Mammary epithelial cell (primary cell): ENCODE measurements at regions of chr3 and their contacts with region 1.

Region 1: DNA sequence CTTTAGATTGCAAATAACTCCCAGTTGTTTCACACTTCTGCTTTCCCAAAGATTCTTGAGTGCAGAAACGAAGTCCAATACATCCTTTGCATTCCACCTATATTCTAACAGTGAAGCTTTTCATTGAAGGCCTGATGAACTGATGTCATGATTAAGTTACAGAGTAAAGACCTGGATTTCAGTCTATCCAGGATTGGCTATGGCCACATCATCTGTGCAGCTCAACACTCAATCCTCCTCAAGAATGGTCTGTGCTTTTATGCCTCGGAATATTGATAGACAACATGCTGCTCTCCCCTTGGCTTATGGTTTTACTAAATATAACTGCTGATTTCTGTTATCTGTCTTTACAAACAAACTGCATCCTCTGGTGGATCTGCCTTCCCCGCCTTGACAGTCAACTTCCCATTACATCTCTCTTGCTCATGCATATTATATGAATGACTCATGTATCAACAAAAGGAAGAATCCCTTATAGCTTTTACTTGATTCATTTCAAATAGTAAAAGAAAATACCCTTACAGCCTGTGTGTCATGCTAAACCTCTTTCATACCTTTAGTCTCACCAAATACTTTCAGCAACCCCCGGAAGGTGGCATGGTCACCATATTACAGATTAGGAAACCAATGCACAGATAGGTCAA is 59.5 kb downstream of the SCN11A start:
- DNase-seq: peak; percentile 71
- H3K4me3 ChIP-seq: no peak overlapping the region
- H3K27ac ChIP-seq: peak overlapping the region; percentile 37
- H3K4me1 ChIP-seq: peaks cover 16% of the 10 kb centered on the region
- H3K27me3 ChIP-seq: no peaks in the 10 kb centered on the region
- CTCF ChIP-seq: no peak

Region 2: DNA sequence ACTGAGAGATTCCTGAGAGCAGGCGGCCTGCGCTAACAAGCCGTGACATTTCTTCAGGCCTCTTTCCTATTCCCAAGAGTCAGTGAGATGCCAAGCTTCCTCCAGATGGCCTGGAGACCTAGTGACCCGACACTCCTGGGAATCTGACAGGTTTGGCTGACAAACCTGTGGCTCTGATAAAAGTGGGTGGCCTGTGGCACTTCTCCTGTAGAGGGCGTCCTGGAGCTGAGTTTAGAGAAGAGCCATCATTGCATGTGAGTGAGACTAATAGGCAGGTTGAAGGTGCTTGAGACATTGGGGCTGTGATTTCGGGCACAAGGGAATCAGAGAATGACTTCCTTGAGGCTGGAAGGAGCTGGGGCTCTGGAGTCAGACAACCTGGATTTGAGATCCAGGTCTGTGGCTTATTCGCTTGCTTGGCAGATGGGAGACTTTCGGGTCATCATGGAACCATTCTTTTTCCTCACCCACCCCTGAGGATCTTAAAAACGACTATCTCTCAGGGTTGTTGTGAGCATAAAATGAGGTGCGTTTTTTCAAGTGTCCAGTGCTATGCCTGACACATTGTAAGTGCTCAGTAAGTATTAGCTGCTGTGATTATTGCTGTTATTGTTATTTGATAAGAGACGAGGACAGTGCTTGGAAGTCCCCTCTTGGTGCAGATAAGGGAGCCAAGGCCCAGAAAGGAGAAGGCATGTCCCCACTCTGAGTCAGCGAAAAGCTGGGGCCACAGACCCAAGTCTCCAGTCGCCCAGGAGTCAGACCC is 253.4 kb before region 1 on chr3:
- CTCF ChIA-PET with region 1: no interaction called
- dilution Hi-C with region 1: no loop called
- in situ Hi-C with region 1: loop called in 1 of 2 experiments (anchors 25 kb)
- intact Hi-C with region 1: no loop called
- DNase-seq: peak; percentile 32
- H3K4me3 ChIP-seq: no peak overlapping the region
- H3K27ac ChIP-seq: no peak overlapping the region
- H3K4me1 ChIP-seq: no peaks in the 10 kb centered on the region
- H3K27me3 ChIP-seq: no peaks in the 10 kb centered on the region
- CTCF ChIP-seq: peak; percentile 84 to 87